ENCODE measurements at regions of chr18 and their contacts with region 1.

Region 1: GRCh38 chr18:73879766-73880165 is 267.9 kb downstream of the FBXO15 start:
- DNase-seq: no peak
- ATAC-seq: no peak

Region 2: DNA sequence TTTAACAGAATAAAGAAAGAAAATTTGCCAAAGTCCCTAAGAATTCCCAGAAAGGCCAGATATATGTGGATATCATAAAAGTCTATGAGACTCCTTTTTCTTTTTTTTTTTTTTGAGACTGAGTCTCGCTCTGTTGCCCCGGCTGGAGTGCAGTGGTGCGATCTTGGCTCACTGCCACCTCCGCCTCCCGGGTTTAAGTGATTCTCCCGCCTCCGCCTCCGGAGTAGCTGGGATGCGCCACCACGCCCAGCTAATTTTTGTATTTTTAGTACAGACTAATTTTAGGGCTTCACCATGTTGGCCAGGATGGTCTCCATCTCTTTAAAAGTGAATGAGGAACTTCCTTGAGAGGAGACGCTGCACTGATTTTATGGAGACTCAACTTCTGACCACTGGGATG is 67.3 kb before region 1 on chr18:
- intact Hi-C with region 1: loop called in 1 of 2 experiments (anchors 10 kb)
- DNase-seq: no peak
- ATAC-seq: no peak

Region 3: DNA sequence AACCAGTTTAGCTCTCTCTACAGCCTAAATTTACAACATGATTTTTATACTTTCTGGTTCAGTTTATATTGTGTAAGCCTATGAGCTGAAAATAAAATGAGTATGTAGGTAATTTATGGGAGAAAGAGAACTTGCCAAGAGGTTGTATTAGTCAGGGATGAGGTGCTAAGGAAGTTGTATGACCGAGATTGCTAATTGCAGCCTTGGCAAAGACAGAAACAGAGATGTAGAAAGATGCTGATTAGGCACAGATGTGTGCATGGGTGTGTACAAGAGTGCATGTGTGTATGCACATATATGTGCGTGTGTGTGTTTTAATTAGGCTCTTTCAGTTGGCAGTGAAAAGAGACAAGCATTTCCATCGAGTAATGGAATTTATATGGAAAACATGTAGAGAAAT is 53.9 kb after region 1 on chr18:
- intact Hi-C with region 1: no loop called
- DNase-seq: no peak
- ATAC-seq: no peak